ENCODE measurements at regions of chr1 and their contacts with region 1.

Region 1: DNA sequence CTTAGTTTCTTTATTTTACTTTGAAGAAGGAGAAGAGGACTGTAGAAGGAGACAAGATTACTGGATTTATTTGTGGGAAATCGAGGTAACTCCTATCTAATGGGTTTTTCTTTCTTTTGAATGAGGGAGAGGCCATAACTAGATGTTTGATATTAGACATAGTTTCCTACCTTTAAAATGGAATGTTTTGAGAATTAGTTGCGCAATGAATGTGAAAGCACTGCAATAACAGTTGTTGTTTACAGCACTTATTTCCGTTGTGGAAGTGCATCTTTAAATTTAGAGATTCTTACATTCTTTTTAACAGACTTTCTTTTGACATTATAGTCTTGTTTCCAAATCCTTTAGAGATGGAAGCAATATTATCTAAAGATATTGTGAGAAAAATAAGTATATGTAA is 229.0 kb downstream of the SRGAP2C start:
- DNase-seq: no peak
- H3K4me3 Mint-ChIP-seq: no peak overlapping the region
- H3K27ac Mint-ChIP-seq: no peak overlapping the region
- H3K4me1 Mint-ChIP-seq: peaks cover 7% of the 10 kb centered on the region
- H3K27me3 Mint-ChIP-seq: peaks cover 3% of the 10 kb centered on the region

Region 2: GRCh38 chr1:121443001-121443540 is 29.3 kb after region 1 on chr1:
- intact Hi-C with region 1: loop called (anchors 2 kb)
- DNase-seq: no peak
- H3K4me3 Mint-ChIP-seq: no peak overlapping the region
- H3K27ac Mint-ChIP-seq: peak overlapping the region; percentile 4
- H3K4me1 Mint-ChIP-seq: peaks cover 32% of the 10 kb centered on the region
- H3K27me3 Mint-ChIP-seq: peaks cover under 1% of the 10 kb centered on the region

Measured in activated T-helper 2 cell treated with anti-CD3 and anti-CD28 coated beads, Interferon-gamma antibody, Interleukin-2, Interleukin-4, amounts not matched to agents 10 μg/mL and 5 μg/mL and 100 μg/mL, durations not matched to agents 14 hours and 24 hours and 36 hours (primary cell).